ENCODE measurements at regions of chr6 and their contacts with region 1.

Region 1: GRCh38 chr6:159693128-159693893 is at the start of gene SOD2:
- DNase-seq: peak; percentile 61 to 93 (median 86)

Region 2: GRCh38 chr6:159726918-159727716 is 33.8 kb after region 1 on chr6 and contains the start of gene WTAP:
- intact Hi-C with region 1: loop called (anchors 2 kb)
- DNase-seq: peak; percentile 86 to 98 (median 95)

Region 3: GRCh38 chr6:159761873-159762680 is 68.8 kb after region 1 on chr6 and contains the start of gene ACAT2:
- intact Hi-C with region 1: loop called (anchors 1 kb)
- DNase-seq: peak; percentile 96 to 100 (median 99)

Region 4: GRCh38 chr6:159789377-159790148 is 96.3 kb after region 1 on chr6 and contains the start of gene TCP1:
- intact Hi-C with region 1: loop called (anchors 2 kb)
- DNase-seq: peak; percentile 97 to 100 (median 99)